A549 (cell line): ENCODE measurements at regions of chr11 and their contacts with region 1.

Region 1: GRCh38 chr11:88016392-88017170 is 158.7 kb downstream of the RAB38 start:
- DNase-seq: peak; percentile 6 to 84
- ATAC-seq: peak; percentile 89 to 98; a peak in 5 of 6 replicates
- H3K4me3 ChIP-seq: no peak overlapping the region
- H3K27ac ChIP-seq: no peak overlapping the region
- H3K4me1 ChIP-seq: no peaks in the 10 kb centered on the region
- CTCF ChIP-seq: peak; percentile 85
- EP300 ChIP-seq: no peak
- POLR2A ChIP-seq: no peak
- RAD21 ChIP-seq: peak; percentile 91 to 93

Region 2: DNA sequence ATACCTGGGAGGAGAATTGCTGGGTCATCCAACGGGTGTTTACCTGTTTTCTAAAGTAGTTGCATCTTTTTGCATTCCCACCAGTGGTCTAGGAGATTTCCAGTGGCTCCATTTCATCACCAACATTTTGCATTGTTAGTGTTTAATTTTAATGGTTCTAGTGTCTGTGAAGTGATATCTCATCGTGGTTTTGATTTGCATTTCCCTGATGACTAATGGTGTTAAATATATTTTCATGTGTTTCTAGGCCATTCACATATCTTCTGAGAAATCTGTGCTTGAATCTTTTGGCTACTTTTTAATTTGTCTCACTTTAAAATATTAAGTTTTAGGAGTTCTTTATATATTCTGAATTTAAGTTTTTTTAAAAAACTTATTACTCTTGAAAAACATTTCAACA is 539.3 kb before region 1 on chr11:
- CTCF ChIA-PET with region 1: no interaction called
- POLR2A ChIA-PET with region 1: no interaction called
- DNase-seq: no peak
- ATAC-seq: no peak
- H3K4me3 ChIP-seq: no peak overlapping the region
- H3K27ac ChIP-seq: no peak overlapping the region
- H3K4me1 ChIP-seq: no peaks in the 10 kb centered on the region
- CTCF ChIP-seq: no peak
- EP300 ChIP-seq: no peak
- POLR2A ChIP-seq: no peak
- RAD21 ChIP-seq: no peak

Region 3: DNA sequence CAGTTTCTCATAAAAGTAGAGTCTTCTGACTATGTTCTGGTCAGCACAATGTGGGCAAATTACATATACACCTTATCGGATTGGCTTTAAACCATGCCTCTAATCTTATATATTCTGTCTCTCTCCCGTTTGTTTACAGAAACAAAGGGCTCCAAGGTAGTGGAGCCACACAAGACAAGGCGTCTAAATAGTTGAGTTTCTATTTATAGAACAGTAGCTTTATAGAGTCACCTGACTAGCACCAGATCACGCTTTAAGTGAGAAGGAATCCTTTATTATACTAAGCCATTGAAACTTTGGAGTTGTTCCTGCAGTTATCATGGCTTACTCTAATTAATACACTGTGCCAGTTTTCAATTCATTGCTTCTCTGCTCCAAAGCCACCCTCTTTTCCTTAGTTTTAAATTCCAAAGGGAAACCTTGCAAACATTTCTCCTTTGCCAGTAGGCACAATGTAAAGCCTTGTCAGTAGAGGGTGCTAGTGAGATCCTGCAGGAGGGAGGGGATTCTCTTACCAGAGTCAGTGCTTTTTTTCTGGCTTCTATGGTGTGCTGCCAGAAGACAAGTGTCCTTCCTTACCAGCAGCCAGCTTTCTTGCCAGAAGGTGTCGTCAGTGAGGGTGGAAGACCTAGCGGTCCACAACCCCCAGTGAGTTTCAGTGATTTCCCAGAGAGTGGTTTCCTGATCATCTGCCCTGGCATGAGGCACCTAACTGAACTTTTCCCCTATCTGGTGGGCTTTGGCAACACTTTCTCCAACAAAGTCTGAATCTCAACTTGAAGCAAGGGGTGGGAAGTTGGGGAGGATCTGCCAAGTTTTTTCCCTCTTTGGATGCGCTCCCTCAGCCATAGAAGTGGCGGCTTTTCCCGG is 87.0 kb after region 1 on chr11:
- CTCF ChIA-PET with region 1: interaction called, 18 read pairs
- POLR2A ChIA-PET with region 1: no interaction called
- DNase-seq: peak; percentile 58 to 95
- ATAC-seq: peak; percentile 96 to 99
- H3K4me3 ChIP-seq: peak overlapping the region; percentile 21
- H3K27ac ChIP-seq: peak overlapping the region; percentile 79 to 87
- H3K4me1 ChIP-seq: peaks cover 41% of the 10 kb centered on the region
- CTCF ChIP-seq: peak; percentile 89
- EP300 ChIP-seq: no peak
- POLR2A ChIP-seq: no peak
- RAD21 ChIP-seq: peak; percentile 70 to 77

Region 4: GRCh38 chr11:88281317-88281712 is 264.7 kb after region 1 on chr11:
- CTCF ChIA-PET with region 1: interaction called, 14 read pairs
- POLR2A ChIA-PET with region 1: no interaction called
- DNase-seq: peak in 1 of 2 experiments; percentile 11
- ATAC-seq: peak in 1 of 2 experiments; percentile 34; a peak in 1 of 6 replicates
- H3K4me3 ChIP-seq: no peak overlapping the region
- H3K27ac ChIP-seq: no peak overlapping the region
- H3K4me1 ChIP-seq: no peaks in the 10 kb centered on the region
- CTCF ChIP-seq: peak; percentile 26; the same call in 1 of the 3 replicates
- EP300 ChIP-seq: no peak
- POLR2A ChIP-seq: no peak
- RAD21 ChIP-seq: peak; percentile 46 to 51; a peak in 4 of 5 replicates

Region 5: DNA sequence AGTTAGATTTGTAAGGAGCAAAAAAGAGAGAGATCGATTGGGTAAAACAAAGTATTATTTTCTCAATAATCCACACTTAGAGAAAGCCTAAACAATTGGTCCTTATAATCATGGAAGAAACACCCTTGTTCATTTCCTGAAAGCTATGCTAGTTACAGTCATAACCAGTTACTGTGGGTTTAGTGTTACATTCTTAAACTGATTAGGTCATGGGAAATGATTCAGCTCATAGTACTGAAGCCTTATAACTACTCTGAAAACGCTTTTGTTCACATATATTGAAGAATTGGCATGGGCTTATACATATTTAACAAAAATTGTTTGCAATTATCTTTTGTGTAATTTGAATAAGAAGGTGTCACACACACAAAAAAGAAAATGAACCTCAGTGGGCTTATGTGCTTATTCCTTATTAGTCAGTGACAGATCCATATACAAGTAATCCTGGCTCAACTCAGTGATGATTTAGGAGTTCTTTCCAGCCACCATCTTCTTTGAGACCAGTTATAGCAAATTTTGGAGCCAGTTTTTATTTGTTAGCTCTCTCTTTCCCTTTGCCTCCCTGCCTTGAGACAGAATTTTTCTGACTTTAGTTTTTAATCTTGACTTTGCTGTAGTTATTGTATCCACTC is 519.5 kb after region 1 on chr11:
- CTCF ChIA-PET with region 1: interaction called, 75 read pairs
- POLR2A ChIA-PET with region 1: no interaction called
- DNase-seq: peak; percentile 40 to 64
- ATAC-seq: peak; percentile 95
- H3K4me3 ChIP-seq: no peak overlapping the region
- H3K27ac ChIP-seq: peak overlapping the region; percentile 65 to 72
- H3K4me1 ChIP-seq: peaks cover 38% of the 10 kb centered on the region
- CTCF ChIP-seq: no peak
- EP300 ChIP-seq: no peak
- POLR2A ChIP-seq: no peak
- RAD21 ChIP-seq: no peak

Region 6: DNA sequence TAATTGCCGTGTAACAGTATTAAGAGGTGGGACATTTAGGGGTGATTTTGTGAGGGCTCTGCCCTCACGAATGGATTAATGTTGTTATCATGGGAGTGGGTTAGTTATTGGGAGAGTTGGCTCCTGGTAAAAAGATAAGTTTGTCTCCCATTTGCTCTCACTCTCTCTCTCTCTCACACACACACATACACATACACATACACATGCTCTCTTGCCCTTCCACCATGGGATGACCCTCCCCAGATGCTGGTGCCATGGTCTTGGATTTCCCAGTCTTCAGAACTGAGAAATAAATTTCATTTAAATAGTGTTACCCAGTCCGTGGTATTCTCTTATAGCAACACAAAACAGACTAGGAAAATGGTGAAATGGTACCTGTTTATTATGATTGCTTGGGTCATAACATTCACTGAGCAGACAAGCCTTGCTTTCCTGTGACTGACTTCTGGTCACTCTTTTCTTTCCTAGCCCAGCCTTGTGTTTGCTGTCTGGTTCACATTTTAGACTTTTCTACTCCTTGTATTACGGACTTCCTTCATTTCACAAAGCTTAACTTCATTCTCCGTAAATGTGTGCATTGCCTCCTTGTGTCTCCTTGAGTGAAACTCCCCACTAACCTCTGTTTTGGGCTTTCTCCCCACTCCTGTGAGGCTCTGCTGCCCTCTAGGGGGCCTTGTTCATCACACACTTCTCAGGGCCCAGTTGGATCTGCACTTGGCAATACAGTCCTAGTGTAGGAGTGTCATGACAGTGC is 527.5 kb after region 1 on chr11:
- CTCF ChIA-PET with region 1: interaction called, 75 read pairs
- POLR2A ChIA-PET with region 1: no interaction called
- DNase-seq: peak; percentile 48 to 82
- ATAC-seq: peak; percentile 100
- H3K4me3 ChIP-seq: no peak overlapping the region
- H3K27ac ChIP-seq: peak overlapping the region; percentile 11 to 59; a peak in 5 of 6 replicates
- H3K4me1 ChIP-seq: peaks cover 6% of the 10 kb centered on the region; the same call in 1 of the 3 replicates
- CTCF ChIP-seq: peak; percentile 99
- EP300 ChIP-seq: no peak
- POLR2A ChIP-seq: no peak
- RAD21 ChIP-seq: peak; percentile 99 to 100

Region 7: DNA sequence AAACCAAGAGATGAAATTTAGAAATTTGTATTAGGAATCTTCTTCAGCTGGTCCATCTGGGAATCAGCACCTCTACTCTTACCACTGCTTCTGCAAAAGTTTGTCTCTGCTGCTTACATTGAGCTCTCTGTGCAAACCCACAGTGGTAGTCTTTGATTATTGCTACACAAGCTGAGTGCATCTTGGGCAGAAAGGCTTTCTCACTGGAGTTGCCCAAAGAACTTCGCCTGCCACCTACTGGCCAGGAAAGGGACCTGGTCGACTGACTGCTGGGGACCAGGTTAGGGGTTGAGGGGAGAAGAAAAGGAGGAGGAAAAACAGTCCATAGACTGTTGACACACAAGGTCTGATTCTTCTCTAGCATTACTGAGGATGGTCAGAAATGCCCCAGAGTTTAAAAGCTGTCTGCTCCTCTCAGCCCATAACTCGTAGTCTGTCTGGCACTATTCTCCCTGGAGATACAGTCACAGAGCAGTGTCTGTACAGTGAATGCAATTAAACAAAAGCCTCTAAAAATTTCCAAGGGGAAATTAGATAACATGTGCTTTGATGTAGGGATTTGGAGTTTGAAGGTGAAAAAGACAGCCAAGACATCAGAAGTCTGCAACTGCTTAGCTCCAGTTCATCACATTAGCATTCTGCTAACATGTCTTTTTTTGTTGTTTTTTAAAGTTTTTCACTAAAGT is 535.9 kb after region 1 on chr11:
- CTCF ChIA-PET with region 1: interaction called, 42 read pairs
- POLR2A ChIA-PET with region 1: no interaction called
- DNase-seq: peak; percentile 41 to 68
- ATAC-seq: peak; percentile 86 to 96
- H3K4me3 ChIP-seq: no peak overlapping the region
- H3K27ac ChIP-seq: no peak overlapping the region
- H3K4me1 ChIP-seq: peaks cover 18% of the 10 kb centered on the region
- CTCF ChIP-seq: peak; percentile 65
- EP300 ChIP-seq: no peak
- POLR2A ChIP-seq: no peak
- RAD21 ChIP-seq: peak; percentile 63 to 75

Region 8: DNA sequence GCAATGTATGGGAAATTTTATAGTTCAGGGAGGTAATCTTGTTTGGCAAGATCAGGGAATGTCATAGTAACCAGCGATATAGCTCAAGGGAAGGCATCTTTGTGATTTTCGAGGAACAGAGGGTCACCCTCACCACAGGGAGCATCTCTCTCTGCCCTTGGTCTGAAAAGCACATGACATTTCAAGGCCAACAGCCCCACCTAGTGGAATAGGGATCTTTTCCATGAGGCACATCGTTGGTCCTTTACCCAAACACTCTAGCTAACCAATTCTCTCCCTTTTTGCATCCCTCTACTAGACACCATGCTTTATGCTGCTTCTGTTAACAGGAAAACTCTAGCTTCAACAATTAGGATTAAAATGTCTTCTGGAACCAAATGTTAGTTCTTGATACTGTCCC is 870.2 kb after region 1 on chr11:
- CTCF ChIA-PET with region 1: interaction called, 15 read pairs
- POLR2A ChIA-PET with region 1: no interaction called
- DNase-seq: peak; percentile 6 to 57
- ATAC-seq: peak; percentile 83 to 91; a peak in 5 of 6 replicates
- H3K4me3 ChIP-seq: no peak overlapping the region
- H3K27ac ChIP-seq: no peak overlapping the region
- H3K4me1 ChIP-seq: no peaks in the 10 kb centered on the region
- CTCF ChIP-seq: peak; percentile 47
- EP300 ChIP-seq: no peak
- POLR2A ChIP-seq: no peak
- RAD21 ChIP-seq: peak; percentile 66 to 76